ENCODE measurements at regions of chr12 and their contacts with region 1.

Region 1: GRCh38 chr12:85779768-85780167 is 56.4 kb downstream of the RASSF9 start:
- DNase-seq: peak; percentile 66
- ATAC-seq: peak; percentile 82
- H3K4me3 ChIP-seq: no peak overlapping the region
- H3K27ac ChIP-seq: peak overlapping the region; percentile 4; the same call in 1 of the 2 replicates
- H3K4me1 ChIP-seq: peaks cover 33% of the 10 kb centered on the region
- H3K27me3 ChIP-seq: no peaks in the 10 kb centered on the region
- CTCF ChIP-seq: no peak

Region 2: DNA sequence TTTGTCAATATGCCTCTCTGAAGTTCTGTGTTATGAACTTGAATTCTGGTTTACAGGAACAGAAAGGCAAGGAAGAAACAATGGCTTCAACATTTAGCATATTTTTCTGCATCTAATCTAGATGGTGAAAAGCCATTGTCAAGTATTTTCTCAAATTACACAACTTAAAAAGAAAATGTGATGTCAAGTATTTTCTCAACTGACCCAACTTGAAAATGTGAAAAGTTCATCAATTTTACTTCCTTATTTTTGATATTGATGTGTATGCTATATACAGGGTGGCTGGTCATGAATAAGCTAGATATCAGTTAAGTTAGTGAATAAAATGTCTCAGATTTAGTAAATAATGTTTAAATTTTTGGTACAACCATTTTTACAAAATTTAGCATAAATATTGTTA is 303.0 kb before region 1 on chr12:
- CTCF ChIA-PET with region 1: no interaction called
- POLR2A ChIA-PET with region 1: no interaction called
- intact Hi-C with region 1: loop called (anchors 10 kb)
- DNase-seq: no peak
- ATAC-seq: no peak
- H3K4me3 ChIP-seq: no peak overlapping the region
- H3K27ac ChIP-seq: no peak overlapping the region
- H3K4me1 ChIP-seq: no peaks in the 10 kb centered on the region
- H3K27me3 ChIP-seq: no peaks in the 10 kb centered on the region
- CTCF ChIP-seq: no peak

Region 3: GRCh38 chr12:85580562-85581168 is 199.1 kb before region 1 on chr12:
- CTCF ChIA-PET with region 1: no interaction called
- POLR2A ChIA-PET with region 1: no interaction called
- intact Hi-C with region 1: loop called (anchors 1 kb)
- DNase-seq: peak; percentile 46
- ATAC-seq: peak; percentile 78; the same call in 1 of the 2 replicates
- H3K4me3 ChIP-seq: no peak overlapping the region
- H3K27ac ChIP-seq: peak overlapping the region; percentile 23; the same call in 1 of the 2 replicates
- H3K4me1 ChIP-seq: peaks cover 9% of the 10 kb centered on the region
- H3K27me3 ChIP-seq: no peaks in the 10 kb centered on the region
- CTCF ChIP-seq: no peak

Region 4: GRCh38 chr12:85626001-85626781 is 153.6 kb before region 1 on chr12:
- CTCF ChIA-PET with region 1: no interaction called
- POLR2A ChIA-PET with region 1: no interaction called
- intact Hi-C with region 1: no loop called
- DNase-seq: peak; percentile 82
- ATAC-seq: peak; percentile 79
- H3K4me3 ChIP-seq: no peak overlapping the region; the same call in 1 of the 2 replicates
- H3K27ac ChIP-seq: peak overlapping the region; percentile 85
- H3K4me1 ChIP-seq: peaks cover 72% of the 10 kb centered on the region
- H3K27me3 ChIP-seq: no peaks in the 10 kb centered on the region
- CTCF ChIP-seq: no peak

Measured in PC-3 (cell line).